Activated T-helper 1 cell treated with anti-CD3 and anti-CD28 coated beads, Interleukin-12 subunit alpha, Interleukin-12 subunit beta, Interleukin-2, Interleukin-4 antibody, amounts not matched to agents 30 ng/mL and 10 ng/mL and 1 ng/mL, durations not matched to agents 14 hours and 24 hours and 36 hours (primary cell): ENCODE measurements at regions of chr16 and their contacts with region 1.

Region 1: GRCh38 chr16:56781528-56781961 is 51.6 kb downstream of the NUP93 start:
- DNase-seq: no peak
- H3K4me3 Mint-ChIP-seq: no peak overlapping the region
- H3K27ac Mint-ChIP-seq: no peak overlapping the region
- H3K4me1 Mint-ChIP-seq: peaks cover 39% of the 10 kb centered on the region
- H3K27me3 Mint-ChIP-seq: no peaks in the 10 kb centered on the region

Region 2: GRCh38 chr16:56583351-56584168 is 198.0 kb before region 1 on chr16:
- intact Hi-C with region 1: no loop called
- DNase-seq: no peak
- H3K4me3 Mint-ChIP-seq: no peak overlapping the region
- H3K27ac Mint-ChIP-seq: no peak overlapping the region
- H3K4me1 Mint-ChIP-seq: peaks cover under 1% of the 10 kb centered on the region
- H3K27me3 Mint-ChIP-seq: peaks cover 33% of the 10 kb centered on the region

Region 3: DNA sequence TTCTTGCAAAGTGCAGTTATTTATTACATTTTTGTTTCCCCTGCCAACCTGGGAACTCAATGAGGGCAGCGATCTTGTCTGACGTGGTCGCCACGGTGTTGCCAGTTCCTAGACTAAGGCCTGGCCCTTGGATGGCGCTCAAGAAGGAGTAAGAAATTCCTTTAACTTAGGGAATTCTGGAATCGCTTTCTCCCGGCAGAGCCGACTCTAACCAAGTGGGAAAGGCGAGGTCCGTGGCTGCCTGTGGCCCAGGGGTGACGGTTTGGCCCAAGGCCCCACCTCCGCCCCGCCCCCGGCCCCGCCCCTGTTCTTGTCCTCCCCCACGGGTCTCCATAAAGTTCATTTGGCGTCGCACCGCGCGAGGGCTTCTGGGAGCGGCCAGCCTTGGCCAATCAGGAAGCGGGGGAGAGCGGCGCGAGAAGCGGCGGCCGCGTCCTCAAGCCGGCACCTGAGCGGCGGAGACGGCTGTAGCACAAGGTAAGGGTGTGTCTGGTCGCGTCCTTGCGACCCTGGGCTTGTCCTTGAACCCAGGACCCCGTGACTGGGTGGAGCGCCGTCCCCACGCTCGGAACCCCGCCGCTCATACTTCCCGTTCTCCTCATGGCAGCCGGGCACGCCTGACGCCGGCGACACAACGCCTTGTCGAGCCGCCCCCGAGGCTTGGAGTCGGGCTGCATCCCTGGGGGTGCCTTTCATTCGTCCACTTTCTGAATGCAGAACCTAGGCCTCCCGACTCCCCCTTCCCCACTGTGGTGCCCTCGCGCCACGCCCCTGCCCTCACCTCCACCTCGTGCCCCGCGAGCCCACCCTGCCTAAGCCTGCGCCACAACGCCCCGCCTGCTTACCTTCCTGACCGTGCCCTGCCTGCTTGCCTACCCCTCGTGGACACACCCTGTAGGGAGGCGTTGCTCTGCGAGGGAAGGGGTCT is 51.5 kb before region 1 on chr16 and contains the start of gene NUP93:
- intact Hi-C with region 1: loop called (anchors 5 kb)
- DNase-seq: peak; percentile 87
- H3K4me3 Mint-ChIP-seq: no peak within 1 kb of the TSS
- H3K27ac Mint-ChIP-seq: peak within 1 kb of the TSS; percentile 88
- H3K4me1 Mint-ChIP-seq: peaks cover 13% of the 10 kb centered on the region
- H3K27me3 Mint-ChIP-seq: peaks cover 2% of the 10 kb centered on the region
- total RNA-seq, gene NUP93: 150 and 152 TPM in 2 replicates

Region 4: GRCh38 chr16:56764835-56765234 is 16.7 kb before region 1 on chr16:
- intact Hi-C with region 1: loop called (anchors 2 kb)
- DNase-seq: no peak
- H3K4me3 Mint-ChIP-seq: no peak overlapping the region
- H3K27ac Mint-ChIP-seq: peak overlapping the region; percentile 16
- H3K4me1 Mint-ChIP-seq: peaks cover 32% of the 10 kb centered on the region
- H3K27me3 Mint-ChIP-seq: no peaks in the 10 kb centered on the region